Activated T-helper 2 cell treated with anti-CD3 and anti-CD28 coated beads, Interferon-gamma antibody, Interleukin-2, Interleukin-4, amounts not matched to agents 10 μg/mL and 5 μg/mL and 100 μg/mL, durations not matched to agents 14 hours and 24 hours and 36 hours (primary cell): ENCODE measurements at regions of chr15 and their contacts with region 1.

Region 1: DNA sequence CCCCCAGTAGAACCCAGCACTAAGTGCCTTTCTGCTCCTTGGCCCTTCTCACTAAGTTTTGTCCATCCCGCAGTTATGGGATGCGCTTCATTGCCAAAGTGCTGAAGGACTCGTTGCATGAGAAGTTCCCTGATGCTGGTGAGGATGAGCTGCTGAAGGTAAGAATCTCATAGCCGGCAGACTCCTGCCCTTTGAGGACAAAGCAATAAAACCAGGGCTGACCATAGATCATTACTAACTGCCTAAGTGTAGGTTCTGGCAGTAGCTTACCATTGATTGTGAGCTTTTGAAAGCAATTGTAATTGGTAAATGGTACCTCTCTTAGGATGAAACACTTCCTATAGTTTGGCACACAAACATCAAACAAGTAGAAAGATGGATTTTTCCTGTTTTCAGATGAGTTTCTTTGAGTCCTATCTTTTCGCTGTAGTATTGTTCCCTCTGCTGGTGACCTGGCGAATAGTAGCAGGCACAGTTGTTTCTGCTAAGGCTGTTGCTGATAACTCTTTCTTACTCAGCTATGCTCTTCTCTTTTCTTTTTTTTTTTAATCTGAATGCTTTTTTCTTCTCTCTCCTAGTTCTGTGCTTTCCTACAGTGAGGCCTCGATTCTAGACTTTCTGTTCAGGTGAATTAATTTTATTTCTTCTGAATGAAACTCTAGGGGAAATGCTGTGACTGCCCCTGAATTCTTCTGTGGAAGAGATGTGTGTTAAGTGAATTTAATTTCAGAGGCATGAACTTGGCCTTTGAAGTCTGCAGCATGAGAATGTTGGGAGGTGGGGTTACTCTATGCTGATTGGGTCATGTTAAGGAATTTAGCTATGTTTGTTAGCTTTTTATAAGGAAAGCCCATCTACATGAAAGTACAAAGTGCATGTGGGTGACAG is 47.4 kb upstream of the CRTC3 start:
- DNase-seq: no peak
- H3K4me3 Mint-ChIP-seq: no peak overlapping the region
- H3K27ac Mint-ChIP-seq: no peak overlapping the region
- H3K4me1 Mint-ChIP-seq: peaks cover 35% of the 10 kb centered on the region
- H3K27me3 Mint-ChIP-seq: no peaks in the 10 kb centered on the region

Region 2: GRCh38 chr15:90320061-90320884 is 162.1 kb before region 1 on chr15:
- intact Hi-C with region 1: loop called (anchors 1 kb)
- DNase-seq: peak; percentile 57
- H3K4me3 Mint-ChIP-seq: peak overlapping the region; percentile 3
- H3K27ac Mint-ChIP-seq: no peak overlapping the region
- H3K4me1 Mint-ChIP-seq: peaks cover 6% of the 10 kb centered on the region
- H3K27me3 Mint-ChIP-seq: no peaks in the 10 kb centered on the region